Natural killer cell (primary cell): ENCODE measurements at regions of chr11 and their contacts with region 1.

Region 1: GRCh38 chr11:118227865-118228785 is 3.3 kb upstream of the JAML start:
- DNase-seq: peak; percentile 40 to 75
- ATAC-seq: peak; percentile 43 to 85 (median 70)
- H3K4me3 ChIP-seq: no peak overlapping the region
- H3K4me3 Mint-ChIP-seq: peak overlapping the region; percentile 80
- H3K27ac ChIP-seq: peak overlapping the region; percentile 70
- H3K27ac Mint-ChIP-seq: peak overlapping the region in 1 of 2 donors; percentile 77
- H3K4me1 ChIP-seq: peaks cover 54% of the 10 kb centered on the region
- H3K4me1 Mint-ChIP-seq: peaks cover 39 to 49% of the 10 kb centered on the region in 2 donors
- H3K27me3 ChIP-seq: no peaks in the 10 kb centered on the region
- H3K27me3 Mint-ChIP-seq: peaks cover 9 to 23% of the 10 kb centered on the region in 2 donors
- CTCF ChIP-seq: no peak

Region 2: GRCh38 chr11:118139578-118139977 is 88.5 kb before region 1 on chr11:
- intact Hi-C with region 1: no loop called
- DNase-seq: no peak
- ATAC-seq: no peak
- H3K4me3 ChIP-seq: no peak overlapping the region
- H3K4me3 Mint-ChIP-seq: no peak overlapping the region
- H3K27ac ChIP-seq: no peak overlapping the region
- H3K27ac Mint-ChIP-seq: no peak overlapping the region
- H3K4me1 ChIP-seq: no peaks in the 10 kb centered on the region
- H3K4me1 Mint-ChIP-seq: no peaks in the 10 kb centered on the region
- H3K27me3 ChIP-seq: peaks cover 2% of the 10 kb centered on the region
- H3K27me3 Mint-ChIP-seq: peaks cover 33 to 52% of the 10 kb centered on the region in 2 donors
- CTCF ChIP-seq: no peak

Region 3: DNA sequence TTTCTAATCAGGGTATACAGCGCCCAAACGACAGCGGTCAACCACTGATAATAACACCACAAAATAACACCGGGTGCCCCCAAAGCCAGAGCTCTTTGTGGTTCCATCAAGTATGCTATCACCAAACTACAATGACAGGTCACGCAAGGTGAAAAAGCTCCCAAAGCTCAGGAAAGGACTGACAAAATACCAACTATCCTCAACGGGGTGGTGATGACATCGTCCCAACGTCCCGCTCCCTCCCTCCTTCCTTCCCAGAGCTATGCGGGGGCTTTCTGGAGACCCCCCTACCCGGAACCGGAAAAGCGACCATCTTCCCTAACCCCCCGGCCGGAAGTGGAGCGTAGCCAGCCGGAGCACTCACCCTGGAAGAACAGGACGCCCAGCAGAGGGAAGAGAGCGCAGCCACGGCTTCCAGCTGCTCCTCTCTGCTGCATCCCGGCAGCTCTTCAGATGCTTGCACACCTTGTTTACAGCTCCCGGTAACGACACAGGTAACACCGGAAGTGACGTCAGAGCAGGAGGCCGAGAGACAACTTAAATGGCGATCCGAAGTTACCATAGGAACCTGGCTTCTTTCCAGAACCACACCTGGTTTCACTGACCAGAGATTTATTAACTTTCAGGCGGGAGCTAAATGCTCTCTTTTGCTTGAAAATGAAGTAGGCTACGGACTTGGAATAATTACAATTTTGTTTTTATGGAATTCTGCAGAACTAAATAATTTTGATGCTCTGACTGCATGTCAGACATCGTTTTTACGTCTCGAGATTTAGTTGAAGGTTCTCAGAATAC is 23.9 kb after region 1 on chr11 and contains the start of gene MPZL3:
- intact Hi-C with region 1: loop called (anchors 1 kb)
- DNase-seq: peak; percentile 76 to 97
- ATAC-seq: peak; percentile 75 to 83 (median 82)
- H3K4me3 ChIP-seq: peak within 1 kb of the TSS; percentile 82
- H3K4me3 Mint-ChIP-seq: peak within 1 kb of the TSS; percentile 98
- H3K27ac ChIP-seq: peak within 1 kb of the TSS; percentile 95
- H3K27ac Mint-ChIP-seq: peak within 1 kb of the TSS; percentile 98
- H3K4me1 ChIP-seq: peaks cover 8% of the 10 kb centered on the region
- H3K4me1 Mint-ChIP-seq: peaks cover 17 to 22% of the 10 kb centered on the region in 2 donors
- H3K27me3 ChIP-seq: no peaks in the 10 kb centered on the region
- H3K27me3 Mint-ChIP-seq: no peaks in the 10 kb centered on the region
- CTCF ChIP-seq: no peak
- total RNA-seq, gene MPZL3: 6.3 to 7.5 (median 6.7) TPM